Activated CD8-positive, alpha-beta T cell treated with anti-CD3 and anti-CD28 coated beads, Interleukin-2, amount 10 ng/mL, durations not matched to agents 7 days and 5 days (primary cell): ENCODE measurements at regions of chr1 and their contacts with region 1.

Region 1: GRCh38 chr1:26695356-26696118 is at the start of gene ARID1A:
- DNase-seq: peak; percentile 96
- ATAC-seq: peak; percentile 61
- H3K4me3 Mint-ChIP-seq: peak within 1 kb of the TSS; percentile 88
- H3K27ac Mint-ChIP-seq: peak within 1 kb of the TSS; percentile 97
- H3K4me1 Mint-ChIP-seq: peaks cover 33% of the 10 kb centered on the region
- H3K27me3 Mint-ChIP-seq: no peaks in the 10 kb centered on the region
- total RNA-seq, gene ARID1A: 122 to 123 TPM

Region 2: DNA sequence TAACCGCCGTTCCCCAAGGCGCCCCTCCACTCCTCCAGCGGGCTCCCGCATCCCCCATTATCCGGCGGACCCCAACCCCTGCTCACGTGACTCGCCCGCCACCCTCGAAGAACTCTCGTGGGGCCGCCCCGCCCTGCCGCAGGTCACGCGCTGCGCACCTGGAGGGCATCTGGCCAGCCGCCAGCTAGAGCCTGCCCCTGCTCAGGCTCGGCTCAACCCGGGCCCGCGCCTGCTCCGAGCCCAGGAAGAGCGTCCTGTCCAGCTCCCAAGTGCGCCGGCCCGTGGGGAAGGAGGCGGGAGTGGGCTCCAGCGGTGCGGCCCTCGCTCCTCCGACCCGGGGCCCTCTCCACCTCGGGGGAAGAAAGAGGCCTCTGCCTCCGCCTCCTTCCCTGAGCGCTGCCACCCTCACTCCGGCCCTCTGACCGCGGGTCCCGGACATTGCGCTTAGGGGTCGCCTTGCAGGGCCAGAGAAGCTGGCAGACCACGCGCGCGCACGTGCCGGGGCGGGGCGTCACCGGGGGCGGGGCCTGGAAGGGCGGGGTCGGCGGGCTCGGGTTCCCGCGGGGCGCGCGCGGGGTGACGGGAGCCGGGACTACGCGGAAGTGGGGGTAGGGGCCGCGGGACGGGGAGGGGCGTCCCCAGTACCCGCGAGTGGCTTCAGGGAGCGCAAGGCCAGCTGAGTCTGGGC is 194.9 kb before region 1 on chr1:
- CTCF ChIA-PET with region 1: interaction called, 11 read pairs
- POLR2A ChIA-PET with region 1: interaction called, 5 read pairs
- DNase-seq: peak; percentile 92
- ATAC-seq: peak; percentile 77
- H3K4me3 Mint-ChIP-seq: peak overlapping the region; percentile 86
- H3K27ac Mint-ChIP-seq: peak overlapping the region; percentile 97
- H3K4me1 Mint-ChIP-seq: peaks cover 32% of the 10 kb centered on the region
- H3K27me3 Mint-ChIP-seq: no peaks in the 10 kb centered on the region

Region 3: GRCh38 chr1:26677306-26678115 is 18.0 kb before region 1 on chr1:
- CTCF ChIA-PET with region 1: interaction called, 62 read pairs
- POLR2A ChIA-PET with region 1: interaction called, 9 read pairs
- DNase-seq: peak; percentile 66
- ATAC-seq: peak; percentile 96
- H3K4me3 Mint-ChIP-seq: no peak overlapping the region
- H3K27ac Mint-ChIP-seq: peak overlapping the region; percentile 47
- H3K4me1 Mint-ChIP-seq: peaks cover 21% of the 10 kb centered on the region
- H3K27me3 Mint-ChIP-seq: peaks cover 2% of the 10 kb centered on the region

Region 4: GRCh38 chr1:26728645-26729044 is 33.1 kb after region 1 on chr1:
- CTCF ChIA-PET with region 1: interaction called, 6 read pairs
- POLR2A ChIA-PET with region 1: interaction called, 11 read pairs
- DNase-seq: no peak
- ATAC-seq: no peak
- H3K4me3 Mint-ChIP-seq: no peak overlapping the region
- H3K27ac Mint-ChIP-seq: peak overlapping the region; percentile 35
- H3K4me1 Mint-ChIP-seq: peaks cover 72% of the 10 kb centered on the region
- H3K27me3 Mint-ChIP-seq: no peaks in the 10 kb centered on the region

Region 5: GRCh38 chr1:26799479-26800142 is 104.1 kb after region 1 on chr1:
- CTCF ChIA-PET with region 1: interaction called, 12 read pairs
- POLR2A ChIA-PET with region 1: interaction called, 15 read pairs
- DNase-seq: peak; percentile 54
- ATAC-seq: peak; percentile 76
- H3K4me3 Mint-ChIP-seq: peak overlapping the region; percentile 74
- H3K27ac Mint-ChIP-seq: peak overlapping the region; percentile 90
- H3K4me1 Mint-ChIP-seq: peaks cover 51% of the 10 kb centered on the region
- H3K27me3 Mint-ChIP-seq: no peaks in the 10 kb centered on the region